PC-3 (cell line): ENCODE measurements at regions of chr6 and their contacts with region 1.

Region 1: GRCh38 chr6:82767037-82767436 is 298.6 kb downstream of the UBE3D start:
- DNase-seq: peak; percentile 9
- ATAC-seq: no peak
- H3K4me3 ChIP-seq: no peak overlapping the region
- H3K27ac ChIP-seq: peak overlapping the region; percentile 37
- H3K4me1 ChIP-seq: peaks cover 20% of the 10 kb centered on the region
- H3K27me3 ChIP-seq: no peaks in the 10 kb centered on the region
- CTCF ChIP-seq: no peak

Region 2: DNA sequence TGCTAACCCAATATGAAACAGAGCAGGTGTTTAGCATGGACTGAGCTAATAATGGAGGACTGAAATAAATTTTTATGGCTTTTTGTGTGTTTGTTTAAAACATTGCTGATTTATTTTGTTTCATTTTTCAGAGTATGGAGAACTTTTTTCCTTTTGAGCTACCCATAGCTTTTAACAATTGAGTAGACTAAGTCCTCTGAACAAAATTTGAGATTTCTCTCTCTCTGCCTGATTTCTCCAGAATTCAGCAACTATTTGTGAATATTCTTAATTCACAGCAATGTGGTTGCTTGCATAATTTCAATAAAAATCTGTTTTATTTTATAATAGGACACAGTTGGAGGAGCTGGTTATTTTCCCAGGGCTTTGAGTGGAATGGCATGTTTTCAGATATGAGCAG is 299.7 kb before region 1 on chr6:
- CTCF ChIA-PET with region 1: no interaction called
- POLR2A ChIA-PET with region 1: no interaction called
- intact Hi-C with region 1: no loop called
- DNase-seq: no peak
- ATAC-seq: no peak
- H3K4me3 ChIP-seq: no peak overlapping the region
- H3K27ac ChIP-seq: no peak overlapping the region
- H3K4me1 ChIP-seq: no peaks in the 10 kb centered on the region
- H3K27me3 ChIP-seq: no peaks in the 10 kb centered on the region
- CTCF ChIP-seq: no peak

Region 3: GRCh38 chr6:82750556-82750955 is 16.5 kb before region 1 on chr6:
- CTCF ChIA-PET with region 1: no interaction called
- POLR2A ChIA-PET with region 1: no interaction called
- intact Hi-C with region 1: no loop called
- DNase-seq: peak; percentile 7
- ATAC-seq: peak; percentile 51; the same call in 1 of the 2 replicates
- H3K4me3 ChIP-seq: no peak overlapping the region
- H3K27ac ChIP-seq: no peak overlapping the region
- H3K4me1 ChIP-seq: peaks cover 16% of the 10 kb centered on the region; the same call in 1 of the 2 replicates
- H3K27me3 ChIP-seq: no peaks in the 10 kb centered on the region
- CTCF ChIP-seq: no peak

Region 4: DNA sequence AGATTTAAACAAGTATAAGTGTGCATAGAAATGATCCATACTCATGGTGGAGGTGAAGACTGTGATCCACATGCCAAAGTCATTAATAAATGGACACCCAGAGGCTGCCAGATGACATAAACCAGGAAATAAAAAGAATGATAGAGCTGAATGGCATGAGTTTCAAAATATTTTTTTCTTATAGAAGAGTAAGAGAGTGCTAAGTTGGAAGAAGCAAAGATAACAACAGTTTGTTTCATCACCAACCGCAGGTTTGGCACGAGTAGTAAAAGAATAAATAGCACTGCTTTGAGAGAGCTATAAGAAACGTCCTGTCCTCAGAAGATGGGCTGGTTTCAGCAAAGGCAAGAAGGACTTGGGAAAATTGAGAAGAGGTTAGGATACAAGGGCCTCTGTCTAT is 51.7 kb after region 1 on chr6:
- CTCF ChIA-PET with region 1: no interaction called
- POLR2A ChIA-PET with region 1: no interaction called
- intact Hi-C with region 1: no loop called
- DNase-seq: peak; percentile 9
- ATAC-seq: no peak
- H3K4me3 ChIP-seq: no peak overlapping the region
- H3K27ac ChIP-seq: no peak overlapping the region
- H3K4me1 ChIP-seq: no peaks in the 10 kb centered on the region
- H3K27me3 ChIP-seq: no peaks in the 10 kb centered on the region
- CTCF ChIP-seq: no peak

Region 5: GRCh38 chr6:82870582-82871172 is 103.6 kb after region 1 on chr6:
- CTCF ChIA-PET with region 1: no interaction called
- POLR2A ChIA-PET with region 1: no interaction called
- intact Hi-C with region 1: loop called (anchors 2 kb)
- DNase-seq: peak; percentile 53
- ATAC-seq: peak; percentile 83
- H3K4me3 ChIP-seq: no peak overlapping the region
- H3K27ac ChIP-seq: 0 out of 2 replicates have a peak overlapping the region, but pooled peaks have one; percentile 20
- H3K4me1 ChIP-seq: peaks cover 36% of the 10 kb centered on the region
- H3K27me3 ChIP-seq: no peaks in the 10 kb centered on the region
- CTCF ChIP-seq: no peak

Region 6: DNA sequence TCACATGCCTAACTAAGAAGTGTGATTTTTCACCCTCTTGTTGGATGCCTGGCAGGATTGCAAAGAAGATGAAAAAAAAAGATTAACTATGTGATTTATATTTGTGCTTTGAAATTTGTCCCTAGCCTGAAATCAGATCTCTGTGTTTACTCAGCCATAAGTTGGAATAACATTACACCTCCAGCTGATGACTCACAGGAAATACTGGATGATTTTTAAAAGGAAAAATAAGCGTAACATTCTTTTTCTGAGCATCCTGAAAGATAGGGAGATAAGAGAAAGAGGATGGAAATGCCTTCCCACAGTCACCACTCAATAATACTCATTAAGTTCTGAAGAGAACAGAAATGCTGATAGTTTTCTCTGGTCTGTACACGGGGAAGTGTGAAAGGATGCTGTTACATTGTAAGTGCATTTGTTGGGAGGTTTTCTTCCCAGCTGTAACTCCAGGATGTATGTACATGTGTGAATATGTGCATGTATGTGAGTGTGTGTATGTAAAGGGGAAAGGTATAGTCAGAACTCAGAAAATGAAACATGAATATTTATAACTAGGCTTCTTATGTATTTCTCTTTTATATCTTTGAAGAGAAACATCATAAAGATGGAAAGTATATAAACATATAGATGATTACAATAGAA is 1048.7 kb after region 1 on chr6:
- CTCF ChIA-PET with region 1: no interaction called
- POLR2A ChIA-PET with region 1: no interaction called
- intact Hi-C with region 1: no loop called
- DNase-seq: peak; percentile 56
- ATAC-seq: peak; percentile 78
- H3K4me3 ChIP-seq: no peak overlapping the region
- H3K27ac ChIP-seq: no peak overlapping the region
- H3K4me1 ChIP-seq: no peaks in the 10 kb centered on the region; the same call in 1 of the 2 replicates
- H3K27me3 ChIP-seq: 0 out of 2 replicates have a peak, but pooled peaks cover 5% of the 10 kb centered on the region
- CTCF ChIP-seq: no peak